Activated CD8-positive, alpha-beta T cell treated with anti-CD3 and anti-CD28 coated beads for 36 hours (primary cell): ENCODE measurements at regions of chr11 and their contacts with region 1.

Region 1: DNA sequence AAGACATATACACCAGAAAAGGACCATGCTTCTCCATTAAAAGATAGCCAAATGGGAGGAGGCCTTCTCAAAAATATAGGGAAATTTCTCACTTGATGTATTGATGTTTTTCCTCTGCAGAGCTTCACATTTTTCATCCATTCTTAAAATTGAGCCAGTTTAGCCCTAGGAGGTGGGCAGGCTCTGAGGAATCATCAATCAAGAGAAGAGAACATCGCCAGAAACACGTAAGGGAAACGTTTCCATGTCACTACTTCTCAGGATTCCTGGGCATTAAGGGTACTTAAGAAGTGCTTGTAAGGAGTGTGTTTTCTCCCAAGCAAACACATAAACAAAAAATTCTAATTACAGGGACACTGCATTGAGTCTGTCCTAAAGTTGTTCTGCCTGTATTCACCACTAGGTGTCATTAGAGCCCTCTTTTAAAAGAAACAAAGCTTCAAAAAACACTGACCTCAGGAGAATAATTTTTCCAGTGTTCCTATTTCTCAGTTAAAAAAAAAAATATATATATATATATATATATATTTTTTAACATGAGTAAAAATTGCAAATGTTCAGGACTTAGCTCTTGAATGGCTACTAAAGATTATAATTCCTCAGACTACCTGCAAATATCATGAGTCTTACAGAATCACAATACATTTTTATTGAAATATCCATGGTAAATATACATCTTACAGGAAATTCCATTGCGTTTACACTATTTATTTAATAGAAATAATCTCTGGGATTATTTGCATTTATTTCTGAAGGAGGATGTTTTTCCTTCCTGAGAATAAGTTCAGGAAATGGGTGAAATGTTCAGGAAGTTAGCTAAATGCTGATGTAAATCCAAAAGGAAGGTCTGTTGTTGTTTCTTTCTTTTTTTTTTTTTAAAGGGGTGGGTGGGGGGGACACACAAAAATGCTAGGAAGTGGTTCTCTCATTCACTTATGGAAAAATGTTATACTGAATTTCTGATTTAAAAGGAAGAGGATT is 16.0 kb downstream of the FZD4 start:
- DNase-seq: no peak
- ATAC-seq: peak; percentile 74
- H3K4me3 Mint-ChIP-seq: no peak overlapping the region
- H3K27ac Mint-ChIP-seq: no peak overlapping the region
- H3K4me1 Mint-ChIP-seq: no peaks in the 10 kb centered on the region
- H3K27me3 Mint-ChIP-seq: peaks cover 10% of the 10 kb centered on the region
- CTCF ChIP-seq: peak; percentile 77

Region 2: GRCh38 chr11:86919557-86920210 is 19.5 kb before region 1 on chr11:
- CTCF ChIA-PET with region 1: interaction called, 14 read pairs
- POLR2A ChIA-PET with region 1: no interaction called
- intact Hi-C with region 1: no loop called
- DNase-seq: peak; percentile 3
- ATAC-seq: no peak
- H3K4me3 Mint-ChIP-seq: no peak overlapping the region
- H3K27ac Mint-ChIP-seq: no peak overlapping the region
- H3K4me1 Mint-ChIP-seq: no peaks in the 10 kb centered on the region
- H3K27me3 Mint-ChIP-seq: peaks cover 2% of the 10 kb centered on the region
- CTCF ChIP-seq: peak; percentile 24

Region 3: GRCh38 chr11:86954269-86955110 is 15.3 kb after region 1 on chr11:
- CTCF ChIA-PET with region 1: interaction called, 17 read pairs
- POLR2A ChIA-PET with region 1: no interaction called
- intact Hi-C with region 1: no loop called
- DNase-seq: peak; percentile 3
- ATAC-seq: no peak
- H3K4me3 Mint-ChIP-seq: peak overlapping the region; percentile 48
- H3K27ac Mint-ChIP-seq: no peak overlapping the region
- H3K4me1 Mint-ChIP-seq: peaks cover 10% of the 10 kb centered on the region
- H3K27me3 Mint-ChIP-seq: peaks cover 38% of the 10 kb centered on the region
- CTCF ChIP-seq: no peak

Region 4: DNA sequence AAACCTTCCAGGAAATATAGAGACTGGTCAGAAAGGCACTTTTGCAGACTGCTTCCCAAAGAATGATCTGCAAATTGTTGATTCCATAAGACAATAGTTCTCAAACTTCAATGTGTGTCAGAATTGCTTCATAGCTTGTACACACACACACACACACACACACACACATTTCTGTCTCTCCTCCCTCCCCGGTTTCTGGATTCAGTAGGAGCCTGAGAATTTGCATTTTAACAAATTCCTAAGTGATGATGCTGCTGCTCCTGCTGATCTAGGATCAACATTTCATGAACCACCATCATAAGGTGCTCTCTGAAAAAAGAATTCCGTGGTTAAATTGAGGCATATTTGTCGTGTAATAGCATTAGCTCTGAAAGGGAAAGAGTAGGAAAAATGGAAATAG is 51.3 kb after region 1 on chr11:
- CTCF ChIA-PET with region 1: interaction called, 14 read pairs
- POLR2A ChIA-PET with region 1: no interaction called
- intact Hi-C with region 1: no loop called
- DNase-seq: no peak
- ATAC-seq: no peak
- H3K4me3 Mint-ChIP-seq: no peak overlapping the region
- H3K27ac Mint-ChIP-seq: no peak overlapping the region
- H3K4me1 Mint-ChIP-seq: no peaks in the 10 kb centered on the region
- H3K27me3 Mint-ChIP-seq: peaks cover 3% of the 10 kb centered on the region
- CTCF ChIP-seq: no peak

Region 5: GRCh38 chr11:87290304-87290922 is 351.2 kb after region 1 on chr11:
- CTCF ChIA-PET with region 1: interaction called, 32 read pairs
- POLR2A ChIA-PET with region 1: no interaction called
- intact Hi-C with region 1: loop called (anchors 2 kb)
- DNase-seq: no peak
- ATAC-seq: no peak
- H3K4me3 Mint-ChIP-seq: no peak overlapping the region
- H3K27ac Mint-ChIP-seq: no peak overlapping the region
- H3K4me1 Mint-ChIP-seq: no peaks in the 10 kb centered on the region
- H3K27me3 Mint-ChIP-seq: no peaks in the 10 kb centered on the region
- CTCF ChIP-seq: peak; percentile 84

Region 6: DNA sequence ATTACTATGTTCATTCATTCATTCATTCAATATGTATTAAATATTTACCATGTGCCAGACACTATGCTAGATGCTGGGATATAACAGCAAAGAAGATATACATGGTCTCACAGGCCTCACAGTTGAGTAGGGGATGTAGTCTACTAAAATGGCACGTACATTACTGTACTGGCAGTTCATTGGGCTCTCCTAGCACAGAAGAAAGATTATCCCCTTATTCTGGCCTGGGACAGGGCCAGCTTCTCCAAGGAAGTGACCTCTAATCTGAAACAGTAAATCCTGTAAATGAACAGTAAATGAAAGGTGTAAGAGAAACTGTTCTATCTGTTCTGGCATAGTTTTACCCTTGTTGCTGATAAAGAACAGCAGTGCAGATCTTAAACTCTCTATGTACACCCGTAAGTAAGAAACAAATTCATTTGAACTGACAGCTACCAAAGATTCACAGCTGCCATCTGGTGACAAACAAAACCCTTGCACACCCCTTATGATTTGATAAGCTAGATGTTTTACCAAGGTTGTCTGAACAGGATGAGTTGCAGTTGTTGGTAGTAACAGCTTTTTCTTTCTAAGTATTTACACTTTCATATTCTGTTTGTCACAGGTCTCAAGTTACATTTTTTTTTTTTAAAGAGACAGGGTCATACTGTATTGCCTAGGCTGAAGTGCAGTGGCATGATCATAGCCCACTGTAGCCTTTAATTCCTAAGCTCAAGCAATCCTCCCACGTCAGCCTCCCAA is 361.6 kb after region 1 on chr11:
- CTCF ChIA-PET with region 1: interaction called, 12 read pairs
- POLR2A ChIA-PET with region 1: no interaction called
- intact Hi-C with region 1: no loop called
- DNase-seq: no peak
- ATAC-seq: no peak
- H3K4me3 Mint-ChIP-seq: no peak overlapping the region
- H3K27ac Mint-ChIP-seq: no peak overlapping the region
- H3K4me1 Mint-ChIP-seq: peaks cover 5% of the 10 kb centered on the region
- H3K27me3 Mint-ChIP-seq: no peaks in the 10 kb centered on the region
- CTCF ChIP-seq: no peak

Region 7: DNA sequence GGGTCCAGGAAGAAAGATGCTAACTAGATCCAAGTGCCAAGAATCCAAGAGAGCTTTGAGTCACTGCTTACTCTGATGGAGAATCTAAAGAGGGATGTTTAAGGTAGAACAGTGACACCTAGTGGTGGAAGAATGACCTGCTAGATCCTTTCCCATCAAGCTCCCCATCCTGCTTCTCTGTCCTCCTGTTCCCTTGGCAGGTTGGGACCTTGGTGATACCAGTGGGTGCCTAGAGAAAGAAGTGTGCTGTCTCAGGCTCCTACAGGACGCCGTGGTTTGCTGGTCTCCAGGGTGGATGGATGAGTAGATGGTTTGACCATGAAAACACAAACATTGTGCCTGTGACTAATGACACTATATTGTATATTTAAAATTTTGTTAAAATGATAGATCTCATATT is 482.2 kb after region 1 on chr11:
- CTCF ChIA-PET with region 1: interaction called, 17 read pairs
- POLR2A ChIA-PET with region 1: no interaction called
- intact Hi-C with region 1: loop called (anchors 5 kb)
- DNase-seq: peak; percentile 33
- ATAC-seq: peak; percentile 58
- H3K4me3 Mint-ChIP-seq: no peak overlapping the region
- H3K27ac Mint-ChIP-seq: no peak overlapping the region
- H3K4me1 Mint-ChIP-seq: no peaks in the 10 kb centered on the region
- H3K27me3 Mint-ChIP-seq: peaks cover 2% of the 10 kb centered on the region
- CTCF ChIP-seq: peak; percentile 68